ENCODE measurements at regions of chr2 and their contacts with region 1.

Region 1: DNA sequence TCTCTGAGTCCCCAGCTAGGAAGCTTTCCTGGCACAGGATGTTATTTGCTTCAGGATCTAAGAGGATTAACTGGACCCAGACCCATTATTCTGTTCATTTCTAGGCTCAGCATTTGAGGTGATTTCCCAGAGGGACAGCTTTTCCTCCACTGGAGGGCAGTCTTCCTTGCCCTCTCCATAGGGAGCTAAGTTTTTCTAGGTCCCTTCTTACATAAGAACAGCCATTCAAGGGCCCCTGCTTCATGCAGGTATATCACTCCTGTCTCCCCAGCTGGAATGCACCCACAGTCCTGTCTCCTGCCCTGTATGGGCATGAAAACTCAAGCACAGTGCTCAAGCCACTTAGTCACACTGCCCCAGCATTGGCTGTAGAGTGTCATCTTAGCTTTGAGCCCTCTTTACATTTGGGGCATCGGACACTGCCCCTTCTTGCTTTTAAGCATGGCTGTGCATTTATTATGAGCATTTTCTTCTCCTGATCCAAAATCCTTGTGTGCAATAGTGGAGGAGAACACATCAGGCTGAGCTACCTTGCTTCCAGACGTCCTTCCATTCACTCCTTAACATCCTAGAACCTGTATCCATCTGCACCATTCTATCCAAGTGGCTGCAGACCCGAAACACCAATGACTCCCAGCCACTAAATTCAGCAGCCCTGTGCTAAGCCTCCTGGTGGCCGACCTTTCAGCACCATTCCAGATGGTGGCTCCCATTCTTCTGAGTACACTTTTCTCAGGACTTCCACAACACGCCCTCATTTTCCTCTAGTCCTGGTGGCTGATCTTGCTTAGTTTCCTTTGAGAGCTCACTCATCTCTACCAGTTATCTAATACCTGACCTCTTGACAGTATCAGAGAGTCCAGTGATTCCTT is 80.0 kb downstream of the COPS8 start:
- DNase-seq: no peak
- H3K4me3 ChIP-seq: no peak overlapping the region
- CTCF ChIP-seq: peak; percentile 53

Region 2: GRCh38 chr2:237075749-237076599 is 89.7 kb before region 1 on chr2:
- CTCF ChIA-PET with region 1: no interaction called
- POLR2A ChIA-PET with region 1: no interaction called
- DNase-seq: no peak
- H3K4me3 ChIP-seq: no peak overlapping the region
- CTCF ChIP-seq: no peak

Region 3: DNA sequence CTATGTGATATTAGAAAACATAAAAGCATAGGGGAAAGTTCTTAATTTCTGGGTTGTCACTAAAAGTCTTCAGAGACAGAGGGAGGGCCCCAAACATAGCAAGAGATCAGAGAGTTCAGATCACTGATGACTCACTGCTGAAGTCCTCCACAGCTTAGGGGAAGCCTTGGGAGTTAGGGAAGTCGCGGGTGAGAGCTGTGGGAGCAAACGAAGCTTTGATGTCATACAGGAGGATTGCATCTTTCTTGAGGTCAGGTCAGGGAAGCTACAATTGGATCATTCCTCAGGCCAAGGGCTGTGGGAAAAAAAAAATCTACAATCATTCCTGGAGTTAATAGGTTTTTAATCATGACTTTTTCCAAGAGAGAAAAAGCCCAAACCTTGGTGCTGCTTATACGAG is 16.2 kb after region 1 on chr2:
- CTCF ChIA-PET with region 1: interaction called, 15 read pairs
- POLR2A ChIA-PET with region 1: no interaction called
- DNase-seq: peak; percentile 91
- H3K4me3 ChIP-seq: no peak overlapping the region
- CTCF ChIP-seq: no peak

Region 4: DNA sequence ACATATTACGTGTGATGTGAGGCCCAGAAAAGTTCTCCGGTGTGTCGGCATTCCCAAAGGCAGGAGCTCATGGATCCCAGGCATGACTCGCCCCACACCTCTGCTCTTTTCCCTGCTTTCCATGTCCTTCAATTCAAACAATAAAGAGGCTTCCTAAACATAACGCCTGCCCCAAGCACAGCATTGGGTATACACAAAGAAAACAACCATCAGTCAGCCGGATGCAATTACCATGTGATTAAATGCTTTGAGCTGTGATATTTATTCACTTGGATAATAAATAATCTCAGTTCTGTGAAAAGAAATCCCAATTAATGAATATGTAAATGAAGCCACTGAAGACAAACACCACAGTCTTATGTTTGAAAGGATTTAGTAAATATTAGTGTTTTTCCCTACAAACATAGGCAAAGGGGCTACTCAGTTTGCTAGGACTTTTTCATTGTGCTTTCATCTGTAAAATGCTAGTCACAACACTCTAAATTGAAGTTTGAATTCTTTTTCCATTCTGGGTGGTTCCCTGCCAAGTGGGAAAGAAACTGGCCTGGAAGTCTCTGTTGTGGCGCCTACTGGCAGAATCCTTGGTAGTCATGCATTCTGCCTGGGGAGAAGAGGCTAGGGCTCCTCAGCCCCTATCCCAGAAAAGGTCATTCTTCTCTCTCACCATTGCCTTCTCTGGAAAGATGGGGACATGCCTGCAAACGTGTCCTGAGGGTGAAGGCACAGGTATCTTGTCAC is 103.7 kb after region 1 on chr2:
- CTCF ChIA-PET with region 1: interaction called, 18 read pairs
- POLR2A ChIA-PET with region 1: no interaction called
- DNase-seq: no peak
- H3K4me3 ChIP-seq: no peak overlapping the region
- CTCF ChIP-seq: no peak

Region 5: GRCh38 chr2:237315170-237315828 is 149.7 kb after region 1 on chr2:
- CTCF ChIA-PET with region 1: interaction called, 35 read pairs
- POLR2A ChIA-PET with region 1: no interaction called
- DNase-seq: peak; percentile 97
- H3K4me3 ChIP-seq: no peak overlapping the region
- CTCF ChIP-seq: peak; percentile 63

Region 6: DNA sequence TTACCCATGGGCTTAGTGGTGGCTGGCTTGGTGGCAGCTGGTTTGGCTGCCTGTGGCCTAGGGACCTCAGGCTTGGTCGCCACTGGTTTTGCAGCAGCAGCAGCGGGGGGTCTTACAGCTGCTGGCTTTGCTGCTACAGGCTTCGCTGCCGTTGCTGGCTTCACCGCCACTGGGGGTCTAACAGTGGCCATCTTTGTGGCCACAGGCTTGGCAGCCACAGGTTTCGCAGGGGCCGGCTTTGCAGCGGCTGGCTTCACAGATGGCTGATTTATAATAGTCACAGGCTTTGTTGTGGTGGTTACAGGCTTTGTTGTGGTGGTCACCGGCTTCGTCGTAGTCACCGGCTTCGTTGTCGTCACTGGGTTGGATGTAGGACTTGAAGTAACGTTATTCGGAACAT is 170.5 kb after region 1 on chr2:
- CTCF ChIA-PET with region 1: interaction called, 23 read pairs
- POLR2A ChIA-PET with region 1: no interaction called
- DNase-seq: no peak
- H3K4me3 ChIP-seq: no peak overlapping the region
- CTCF ChIP-seq: no peak

Region 7: DNA sequence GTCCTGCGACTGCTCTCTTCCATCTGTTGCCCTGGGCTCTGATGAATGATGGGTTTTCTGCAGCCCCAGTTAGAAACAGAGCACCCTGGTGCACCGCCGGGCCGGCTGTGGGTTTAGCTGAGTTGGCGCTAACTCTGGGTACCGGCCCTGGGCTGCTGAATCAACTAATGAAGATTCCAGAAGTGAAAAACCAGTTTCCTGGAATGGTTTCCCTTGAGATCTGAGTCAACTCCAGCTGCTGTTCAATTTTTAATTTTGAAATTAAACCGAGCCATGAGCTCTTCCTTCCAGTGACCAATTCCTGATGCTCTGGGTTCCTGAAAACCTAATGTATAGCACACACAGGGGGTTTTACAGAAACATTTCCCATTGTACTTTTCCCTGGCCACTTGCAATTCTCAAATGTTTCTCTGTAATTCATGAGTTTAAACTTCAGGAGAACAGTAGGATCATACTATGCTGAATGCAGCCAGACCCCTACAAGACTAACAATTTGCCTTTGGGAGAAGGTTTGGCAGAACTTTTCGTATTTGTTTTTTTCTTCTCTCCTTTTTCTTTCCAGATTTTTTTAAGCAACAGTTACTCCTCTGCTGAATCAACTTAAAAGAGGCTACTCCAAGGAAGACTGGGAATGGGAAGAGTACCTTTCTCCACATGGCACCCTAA is 242.8 kb after region 1 on chr2:
- CTCF ChIA-PET with region 1: interaction called, 27 read pairs
- POLR2A ChIA-PET with region 1: no interaction called
- DNase-seq: no peak
- H3K4me3 ChIP-seq: peak overlapping the region; percentile 44
- CTCF ChIP-seq: no peak

Region 8: GRCh38 chr2:237704501-237705434 is 539.1 kb after region 1 on chr2:
- CTCF ChIA-PET with region 1: no interaction called
- POLR2A ChIA-PET with region 1: no interaction called
- DNase-seq: no peak
- H3K4me3 ChIP-seq: no peak overlapping the region
- CTCF ChIP-seq: no peak

Measured in AG04449 (cell line).